ENCODE measurements at regions of chr6 and their contacts with region 1.

Region 1: GRCh38 chr6:138588805-138589434 is 89.6 kb upstream of the NHSL1 start:
- DNase-seq: peak; percentile 30
- ATAC-seq: peak; percentile 20
- H3K4me3 ChIP-seq: no peak overlapping the region
- H3K27ac ChIP-seq: no peak overlapping the region
- H3K4me1 ChIP-seq: peaks cover 11% of the 10 kb centered on the region; the same call in 1 of the 2 replicates
- H3K27me3 ChIP-seq: no peaks in the 10 kb centered on the region
- CTCF ChIP-seq: peak; percentile 90 to 93 (median 93); a peak in 5 of 6 replicates
- EP300 ChIP-seq: no peak
- POLR2A ChIP-seq: no peak
- RAD21 ChIP-seq: peak; percentile 96

Region 2: GRCh38 chr6:138428944-138429598 is 159.8 kb before region 1 on chr6:
- CTCF ChIA-PET with region 1: interaction called, 17 read pairs
- POLR2A ChIA-PET with region 1: no interaction called
- RAD21 ChIA-PET with region 1: interaction called, 9 read pairs
- SMC1A ChIA-PET with region 1: interaction called, 30 read pairs
- in situ Hi-C with region 1: no loop called
- intact Hi-C with region 1: loop called (anchors 1 kb)
- DNase-seq: no peak
- ATAC-seq: peak; percentile 80
- H3K4me3 ChIP-seq: no peak overlapping the region
- H3K27ac ChIP-seq: no peak overlapping the region
- H3K4me1 ChIP-seq: no peaks in the 10 kb centered on the region
- H3K27me3 ChIP-seq: no peaks in the 10 kb centered on the region
- CTCF ChIP-seq: peak; percentile 38 to 69 (median 55); a peak in 5 of 6 replicates
- EP300 ChIP-seq: no peak
- POLR2A ChIP-seq: no peak
- RAD21 ChIP-seq: peak; percentile 81

Region 3: GRCh38 chr6:138600726-138601125 is 11.8 kb after region 1 on chr6:
- CTCF ChIA-PET with region 1: interaction called, 6 read pairs
- POLR2A ChIA-PET with region 1: interaction called, 3 read pairs
- RAD21 ChIA-PET with region 1: interaction called, 8 read pairs
- SMC1A ChIA-PET with region 1: interaction called, 12 read pairs
- in situ Hi-C with region 1: no loop called
- intact Hi-C with region 1: no loop called
- DNase-seq: no peak
- ATAC-seq: no peak
- H3K4me3 ChIP-seq: no peak overlapping the region
- H3K27ac ChIP-seq: no peak overlapping the region
- H3K4me1 ChIP-seq: no peaks in the 10 kb centered on the region
- H3K27me3 ChIP-seq: no peaks in the 10 kb centered on the region
- CTCF ChIP-seq: no peak
- EP300 ChIP-seq: no peak
- POLR2A ChIP-seq: no peak
- RAD21 ChIP-seq: no peak

Region 4: GRCh38 chr6:138654715-138655634 is 66.1 kb after region 1 on chr6:
- CTCF ChIA-PET with region 1: interaction called, 13 read pairs
- POLR2A ChIA-PET with region 1: interaction called, 12 read pairs
- RAD21 ChIA-PET with region 1: interaction called, 23 read pairs
- SMC1A ChIA-PET with region 1: interaction called, 24 read pairs
- in situ Hi-C with region 1: no loop called
- intact Hi-C with region 1: loop called (anchors 1 kb)
- DNase-seq: peak; percentile 50
- ATAC-seq: peak; percentile 98
- H3K4me3 ChIP-seq: no peak overlapping the region
- H3K27ac ChIP-seq: no peak overlapping the region
- H3K4me1 ChIP-seq: peaks cover 9% of the 10 kb centered on the region
- H3K27me3 ChIP-seq: no peaks in the 10 kb centered on the region
- CTCF ChIP-seq: no peak
- EP300 ChIP-seq: peak; percentile 71 to 95; a peak in 3 of 4 replicates
- POLR2A ChIP-seq: no peak
- RAD21 ChIP-seq: no peak

Region 5: GRCh38 chr6:138692058-138692977 is 103.4 kb after region 1 on chr6:
- CTCF ChIA-PET with region 1: interaction called, 89 read pairs
- POLR2A ChIA-PET with region 1: interaction called, 8 read pairs
- RAD21 ChIA-PET with region 1: interaction called, 24 read pairs
- SMC1A ChIA-PET with region 1: interaction called, 13 read pairs
- in situ Hi-C with region 1: no loop called
- intact Hi-C with region 1: loop called (anchors 1 kb)
- DNase-seq: no peak
- ATAC-seq: peak; percentile 74
- H3K4me3 ChIP-seq: peak overlapping the region; percentile 71
- H3K27ac ChIP-seq: no peak overlapping the region
- H3K4me1 ChIP-seq: no peaks in the 10 kb centered on the region
- H3K27me3 ChIP-seq: no peaks in the 10 kb centered on the region
- CTCF ChIP-seq: peak; percentile 58 to 74 (median 72); a peak in 5 of 6 replicates
- EP300 ChIP-seq: no peak
- POLR2A ChIP-seq: no peak
- RAD21 ChIP-seq: peak; percentile 37; the same call in 1 of the 2 replicates

Region 6: DNA sequence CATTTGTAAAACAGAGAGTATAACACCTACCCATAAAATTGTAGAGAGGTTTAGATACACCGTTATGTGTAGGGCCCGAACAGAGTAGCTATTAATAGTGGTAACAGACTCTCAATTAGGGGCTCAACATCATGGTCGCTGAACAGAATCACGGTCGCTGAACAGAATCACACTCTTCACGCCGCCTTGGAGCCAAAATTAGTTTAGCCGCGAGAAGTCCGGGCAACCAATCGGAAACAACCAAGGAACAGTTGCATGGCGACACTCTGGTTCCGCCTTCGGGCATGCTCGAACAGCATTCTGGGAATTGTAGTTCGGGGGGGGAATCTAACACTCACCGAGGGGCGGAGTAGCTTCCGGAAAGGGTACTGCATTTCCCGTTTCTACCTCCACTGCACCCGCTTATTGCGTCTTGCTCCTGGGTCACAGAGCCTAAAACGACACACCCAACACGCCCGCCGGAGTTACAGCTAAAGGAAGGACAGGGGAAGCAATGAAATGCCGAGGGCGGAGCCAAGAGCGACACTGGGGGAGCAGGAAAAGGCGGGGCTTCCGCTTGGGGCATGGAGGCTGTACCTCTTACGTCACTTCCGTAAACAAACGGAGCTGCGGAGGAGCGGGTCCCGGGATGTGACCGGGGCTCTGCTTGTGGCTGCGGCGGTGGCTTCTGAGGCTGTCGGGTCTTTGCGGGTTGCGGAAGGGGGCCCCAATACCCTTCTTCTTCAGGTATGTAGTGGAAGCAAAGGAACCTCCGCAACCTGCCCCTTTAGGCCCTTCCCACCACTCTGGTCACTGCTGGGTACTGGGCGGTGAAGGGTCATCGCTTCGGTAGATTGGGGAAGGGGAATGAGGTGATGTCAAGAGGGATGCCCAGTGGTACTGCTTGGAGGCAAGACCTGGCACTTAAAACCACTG is 184.5 kb after region 1 on chr6 and contains the start of gene CCDC28A:
- CTCF ChIA-PET with region 1: interaction called, 418 read pairs
- POLR2A ChIA-PET with region 1: interaction called, 3 read pairs
- RAD21 ChIA-PET with region 1: interaction called, 8 read pairs
- SMC1A ChIA-PET with region 1: interaction called, 332 read pairs
- in situ Hi-C with region 1: loop called (anchors 5 kb)
- intact Hi-C with region 1: no loop called
- DNase-seq: peak; percentile 93
- ATAC-seq: peak; percentile 94
- H3K4me3 ChIP-seq: peak within 1 kb of the TSS; percentile 89
- H3K27ac ChIP-seq: peak within 1 kb of the TSS; percentile 97
- H3K4me1 ChIP-seq: peaks cover 12% of the 10 kb centered on the region
- H3K27me3 ChIP-seq: no peaks in the 10 kb centered on the region
- CTCF ChIP-seq: no peak
- EP300 ChIP-seq: no peak; a peak in 1 of 4 replicates
- POLR2A ChIP-seq: peak; percentile 79
- RAD21 ChIP-seq: no peak
- polyA plus RNA-seq, gene CCDC28A: 19.6 to 20.5 TPM